Endothelial cell of umbilical vein (primary cell): ENCODE measurements at regions of chr16 and their contacts with region 1.

Region 1: DNA sequence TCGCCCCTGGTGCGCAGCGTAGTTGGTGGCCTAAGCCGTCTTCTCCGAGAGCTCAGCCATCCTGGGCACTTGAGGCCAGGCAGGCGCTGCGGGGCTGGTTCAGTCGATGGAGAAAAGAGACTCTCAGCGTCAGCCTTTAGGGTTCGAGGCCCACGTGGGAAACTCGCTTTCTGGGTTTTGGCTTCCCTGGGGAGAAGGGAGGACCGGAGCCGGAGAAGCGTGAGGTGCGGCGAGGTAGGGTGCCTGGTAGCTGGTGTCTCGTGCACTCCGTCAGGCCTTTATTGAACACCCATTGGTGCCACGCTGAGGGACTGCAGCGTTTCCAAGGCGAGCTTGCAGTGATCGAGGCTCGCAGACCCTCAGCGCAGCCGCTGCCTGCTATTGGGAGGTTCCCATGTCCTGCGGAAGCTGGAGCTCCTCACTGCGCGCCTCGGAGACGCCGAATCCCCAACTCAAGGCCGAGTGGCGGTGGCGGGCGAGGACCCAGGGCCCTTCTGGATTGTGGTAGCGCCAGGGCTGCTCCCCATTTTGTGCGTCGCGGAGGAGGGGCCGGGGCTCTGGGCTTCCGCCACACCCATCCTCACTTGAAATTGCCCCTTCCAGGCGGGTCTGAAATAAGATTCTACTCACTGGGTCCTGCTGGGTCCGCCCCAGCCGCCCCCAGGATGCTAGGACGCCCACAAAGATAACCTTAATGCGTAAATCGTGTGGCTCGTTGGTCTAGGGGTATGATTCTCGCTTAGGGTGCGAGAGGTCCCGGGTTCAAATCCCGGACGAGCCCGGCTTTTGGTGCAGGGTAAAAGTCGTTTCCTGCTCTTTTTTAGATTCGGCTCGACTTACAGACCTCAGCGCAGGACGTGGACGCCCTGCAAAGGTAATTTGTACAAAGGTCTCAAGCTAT is 1.2 kb downstream of the OR1F1 start:
- DNase-seq: peak; percentile 51
- H3K4me3 ChIP-seq: peak overlapping the region; percentile 21 to 77 (median 49)
- H3K27ac ChIP-seq: no peak overlapping the region
- H3K4me1 ChIP-seq: peaks cover 16% of the 10 kb centered on the region
- H3K27me3 ChIP-seq: peaks cover 2 to 3% of the 10 kb centered on the region in 2 experiments
- CTCF ChIP-seq: no peak
- POLR2A ChIP-seq: no peak

Region 2: GRCh38 chr16:3234543-3235541 is 45.7 kb after region 1 on chr16 and contains the start of gene ZNF200:
- CTCF ChIA-PET with region 1: no interaction called
- POLR2A ChIA-PET with region 1: no interaction called
- dilution Hi-C with region 1: no loop called
- intact Hi-C with region 1: loop called (anchors 2 kb)
- DNase-seq: peak; percentile 96
- H3K4me3 ChIP-seq: peak within 1 kb of the TSS; percentile 49 to 58 (median 55)
- H3K27ac ChIP-seq: peak within 1 kb of the TSS; percentile 79
- H3K4me1 ChIP-seq: peaks cover 13% of the 10 kb centered on the region
- H3K27me3 ChIP-seq: no peaks in the 10 kb centered on the region
- CTCF ChIP-seq: no peak
- POLR2A ChIP-seq: peak; percentile 65
- total RNA-seq, gene ZNF200: 9.1 and 10.0 TPM in 2 replicates

Region 3: DNA sequence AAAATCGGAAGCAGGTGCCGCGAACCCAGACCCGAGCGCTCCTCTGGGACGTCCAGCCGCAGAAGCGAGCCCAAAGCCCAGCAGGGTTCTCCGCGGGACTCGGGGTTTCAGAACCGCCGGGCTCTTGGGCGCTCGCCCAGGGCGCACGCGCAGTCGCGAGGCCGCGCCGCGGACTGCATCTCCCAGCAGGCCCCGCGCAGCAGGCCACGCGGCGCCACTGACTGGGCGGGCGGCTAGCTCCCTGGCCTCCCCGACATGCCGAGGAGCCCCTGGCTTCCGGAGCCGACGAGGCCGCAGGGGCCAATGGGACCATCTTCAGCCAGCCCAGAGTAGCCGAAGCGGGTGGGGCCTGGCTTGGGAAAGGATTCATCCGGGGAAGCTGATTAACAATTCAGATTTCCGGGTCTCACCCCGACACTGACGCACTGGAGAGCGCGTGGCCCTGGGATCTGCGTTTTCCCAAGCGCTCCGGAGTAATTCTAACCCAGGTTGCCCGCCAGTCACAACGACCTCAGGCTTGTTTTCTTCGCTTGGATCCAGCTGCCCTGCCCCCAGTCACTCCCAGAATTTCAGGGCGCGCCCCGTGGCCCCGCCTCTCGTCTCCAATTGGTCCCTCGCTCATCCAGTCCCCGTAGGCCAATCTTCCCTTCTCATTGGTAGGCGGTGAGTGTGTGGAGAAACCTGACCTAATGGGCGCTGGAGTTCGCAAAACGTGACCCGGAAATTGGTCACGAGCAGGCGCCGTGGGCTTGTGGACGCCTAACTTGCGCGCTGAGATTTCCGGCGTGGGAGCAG is 93.8 kb after region 1 on chr16 and contains the start of gene ZNF263:
- CTCF ChIA-PET with region 1: no interaction called
- POLR2A ChIA-PET with region 1: no interaction called
- dilution Hi-C with region 1: no loop called
- intact Hi-C with region 1: loop called (anchors 2 kb)
- DNase-seq: peak; percentile 98
- H3K4me3 ChIP-seq: peak within 1 kb of the TSS; percentile 74 to 79 (median 77)
- H3K27ac ChIP-seq: peak within 1 kb of the TSS; percentile 92
- H3K4me1 ChIP-seq: peaks cover 13% of the 10 kb centered on the region
- H3K27me3 ChIP-seq: peaks cover 2 to 6% of the 10 kb centered on the region in 2 experiments
- CTCF ChIP-seq: no peak
- POLR2A ChIP-seq: peak; percentile 75
- total RNA-seq, gene ZNF263: 20.8 and 22.7 TPM in 2 replicates

Region 4: DNA sequence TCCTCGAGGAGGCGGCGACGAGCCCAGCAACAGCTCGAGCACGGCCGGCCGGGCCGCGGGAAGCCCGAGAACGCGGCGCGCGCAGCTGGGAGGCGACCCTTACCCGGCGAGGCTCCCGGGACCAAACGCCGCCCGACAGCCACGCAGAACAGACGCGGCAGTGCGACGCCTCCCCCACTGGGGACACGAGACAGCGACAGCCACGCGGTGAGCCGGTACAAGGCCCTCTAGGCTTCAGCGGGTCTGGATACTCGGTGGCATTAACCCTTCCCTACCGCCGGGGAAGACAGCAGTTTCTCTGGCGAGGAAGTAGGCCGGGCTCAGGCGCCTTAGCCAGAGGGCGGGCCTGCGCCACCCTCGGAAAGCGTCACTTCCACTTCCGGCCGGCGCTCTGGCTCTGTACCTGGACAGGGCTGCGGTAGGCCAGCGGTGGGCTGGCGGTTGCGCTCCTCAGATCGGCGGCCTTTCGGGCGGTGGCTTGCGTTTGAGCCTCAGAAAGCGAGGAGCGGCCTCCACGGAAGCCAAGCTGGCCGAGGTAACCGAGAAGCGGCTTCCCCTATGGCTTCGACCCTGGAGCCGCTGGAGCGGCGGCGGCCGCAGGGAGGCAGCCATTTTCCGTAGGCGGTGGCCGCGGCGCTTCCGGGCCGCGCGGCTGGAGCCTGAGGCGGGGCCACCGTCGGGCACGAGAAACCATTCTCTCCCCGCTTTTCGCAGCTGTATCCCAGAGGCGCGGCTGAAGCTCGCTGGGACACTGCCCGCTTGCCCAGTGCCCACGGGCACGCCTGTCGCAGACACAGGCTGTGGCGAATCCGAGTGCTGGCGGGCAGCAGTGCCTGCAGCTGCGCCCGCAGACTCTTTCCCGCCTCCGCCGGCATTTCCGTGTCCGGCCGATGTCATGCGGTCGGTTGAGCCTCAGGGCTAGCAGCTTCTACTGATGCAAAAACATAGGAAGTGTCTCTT is 116.2 kb after region 1 on chr16 and contains the starts of genes TIGD7 and ZNF75A:
- CTCF ChIA-PET with region 1: no interaction called
- POLR2A ChIA-PET with region 1: no interaction called
- dilution Hi-C with region 1: no loop called
- intact Hi-C with region 1: loop called (anchors 1 kb)
- DNase-seq: peak; percentile 92
- H3K4me3 ChIP-seq: peak within 1 kb of the TSS; percentile 46 to 81 (median 65)
- H3K27ac ChIP-seq: peak within 1 kb of the TSS; percentile 86
- H3K4me1 ChIP-seq: peaks cover 12% of the 10 kb centered on the region
- H3K27me3 ChIP-seq: no peaks in the 10 kb centered on the region
- CTCF ChIP-seq: peak in 1 of 2 donors; percentile 5
- POLR2A ChIP-seq: peak; percentile 97
- total RNA-seq, gene TIGD7: 3.3 and 3.5 TPM in 2 replicates
- total RNA-seq, gene ZNF75A: 28.0 and 28.4 TPM in 2 replicates